HEK293T (cell line): ENCODE measurements at regions of chr18 and their contacts with region 1.

Region 1: GRCh38 chr18:40926679-40927078 is 1028.4 kb upstream of the PIK3C3 start:
- DNase-seq: no peak

Region 2: GRCh38 chr18:39966275-39966674 is 960.4 kb before region 1 on chr18:
- CTCF ChIA-PET with region 1: interaction called, 10 read pairs
- POLR2A ChIA-PET with region 1: no interaction called
- DNase-seq: peak; percentile 30